ENCODE measurements at regions of chr3 and their contacts with region 1.

Region 1: DNA sequence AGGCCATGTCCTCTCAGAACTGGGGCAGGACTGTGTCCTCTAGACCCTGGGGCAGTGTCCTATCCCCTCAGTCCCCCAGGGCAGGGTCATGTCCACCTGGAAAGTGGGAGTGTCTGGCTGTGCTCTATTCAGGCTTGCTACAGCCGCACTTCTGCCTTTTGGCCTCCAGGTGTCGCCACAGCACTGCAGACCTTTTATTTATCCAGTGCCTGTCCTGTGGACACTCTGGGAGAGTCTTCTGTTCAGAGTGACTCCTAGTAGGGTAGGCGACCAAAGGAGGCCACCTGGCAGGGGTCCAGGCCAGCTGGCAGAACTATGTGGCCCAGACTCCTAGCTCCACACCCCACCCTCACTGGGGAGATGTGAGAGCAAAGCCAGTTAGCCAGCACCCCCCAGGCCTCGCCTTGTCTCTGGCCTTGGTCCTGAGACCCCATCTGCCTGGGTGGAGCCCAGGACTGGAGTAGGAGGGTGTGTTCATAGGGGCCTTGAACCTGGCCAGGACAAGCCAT is 3.9 kb downstream of the TMIE start:
- DNase-seq: peak; percentile 90

Region 2: GRCh38 chr3:46866720-46867549 is 161.9 kb after region 1 on chr3:
- intact Hi-C with region 1: loop called in 1 of 2 experiments (anchors 10 kb)
- DNase-seq: peak; percentile 94

Region 3: GRCh38 chr3:46895204-46895660 is 190.2 kb after region 1 on chr3:
- intact Hi-C with region 1: loop called in 1 of 2 experiments (anchors 5 kb)
- DNase-seq: peak; percentile 90

Region 4: DNA sequence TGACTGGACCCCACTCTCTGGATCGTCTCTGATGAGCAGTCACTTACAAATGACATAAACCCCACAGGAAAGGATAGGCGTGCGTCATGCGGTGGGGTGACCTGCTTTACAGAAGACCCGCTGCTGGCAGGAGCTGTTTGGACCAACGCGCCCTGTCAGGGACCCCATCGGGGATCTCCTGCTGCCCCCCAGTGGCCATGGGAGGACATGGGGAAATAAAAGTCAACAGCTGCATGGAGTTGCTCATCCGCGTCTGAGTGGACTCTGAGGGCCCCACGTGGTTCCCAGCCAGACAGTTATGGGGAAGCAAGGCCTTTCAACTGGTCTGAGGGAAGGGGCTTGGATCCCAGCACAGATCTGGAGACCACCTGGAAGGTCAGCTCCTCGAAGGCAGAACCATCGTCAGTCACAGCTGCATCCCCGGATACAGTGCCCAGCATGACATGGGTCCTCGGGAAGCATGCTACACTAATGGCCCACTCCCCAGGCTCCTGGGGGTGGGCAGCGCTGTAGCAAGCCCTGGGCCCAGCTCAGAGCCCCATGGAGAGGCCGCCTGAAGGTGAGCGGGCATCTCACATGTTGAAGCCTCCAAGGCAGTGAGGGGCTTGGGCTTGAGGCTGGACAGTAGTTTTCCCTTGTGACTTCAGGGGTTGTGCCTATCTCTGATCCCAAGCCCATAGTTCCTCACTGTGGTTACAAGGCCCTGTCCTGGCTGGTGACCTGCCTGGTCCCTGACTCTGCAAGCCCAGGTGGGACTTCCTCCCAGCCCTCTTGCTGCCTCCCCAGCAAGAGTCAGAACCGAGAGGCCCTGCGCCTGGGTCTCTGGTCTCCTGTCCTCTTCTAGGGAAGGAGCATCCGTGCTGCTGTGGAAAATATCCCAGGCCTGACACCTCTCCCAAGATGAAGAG is 204.7 kb after region 1 on chr3:
- intact Hi-C with region 1: loop called in 1 of 2 experiments (anchors 5 kb)
- DNase-seq: peak; percentile 96

Region 5: GRCh38 chr3:47324278-47324865 is 619.3 kb after region 1 on chr3:
- intact Hi-C with region 1: loop called in 1 of 2 experiments (anchors 10 kb)
- DNase-seq: no peak